Posterior vena cava (tissue), 2 donors: ENCODE measurements at regions of chr10 and their contacts with region 1.

Region 1: DNA sequence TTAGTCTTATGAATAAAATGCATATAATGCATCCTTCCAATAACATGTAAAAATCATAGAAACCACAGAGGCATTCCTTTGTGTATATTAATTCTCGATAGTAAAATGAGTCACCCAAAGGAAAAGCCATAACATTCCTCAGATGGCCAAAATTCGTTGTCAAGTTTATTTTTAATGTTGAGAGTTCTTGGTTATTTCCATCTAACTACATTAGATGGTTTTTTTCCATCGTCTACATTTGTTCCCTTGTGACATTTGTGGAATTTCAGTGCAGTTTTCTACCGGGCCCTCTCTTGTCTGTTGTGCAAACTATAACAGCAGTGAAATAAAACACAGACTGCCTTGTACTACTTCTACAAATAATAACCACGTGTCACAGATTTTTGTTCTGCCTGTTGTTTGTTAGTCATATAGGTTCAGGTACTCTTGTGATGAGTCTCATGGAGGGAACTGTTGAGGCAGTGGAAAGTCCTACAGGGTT is 54.7 kb upstream of the CCAR1 start:
- DNase-seq: no peak

Region 2: DNA sequence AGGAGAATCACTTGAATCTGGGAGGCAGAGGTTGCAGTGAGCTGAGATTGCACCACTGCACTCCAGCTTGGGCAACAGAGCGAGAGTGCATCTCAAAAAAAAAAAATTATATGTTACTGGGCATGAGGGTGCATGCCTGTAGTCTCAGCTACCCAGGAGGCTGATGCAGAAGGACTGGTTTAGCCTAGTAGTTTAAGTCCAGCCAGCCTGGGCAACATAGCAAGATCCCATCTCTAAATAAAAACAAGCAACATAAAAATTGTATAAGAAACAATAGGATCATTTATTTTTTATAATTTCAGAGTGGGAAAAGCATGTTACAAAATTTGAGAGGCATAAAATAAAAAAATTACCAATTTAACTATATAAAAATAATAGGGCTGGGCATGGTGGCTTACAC is 39.2 kb after region 1 on chr10:
- intact Hi-C with region 1: loop called in 1 of 2 experiments (anchors 5 kb)
- DNase-seq: no peak